CD8-positive, alpha-beta T cell (primary cell): ENCODE measurements at regions of chr4 and their contacts with region 1.

Region 1: DNA sequence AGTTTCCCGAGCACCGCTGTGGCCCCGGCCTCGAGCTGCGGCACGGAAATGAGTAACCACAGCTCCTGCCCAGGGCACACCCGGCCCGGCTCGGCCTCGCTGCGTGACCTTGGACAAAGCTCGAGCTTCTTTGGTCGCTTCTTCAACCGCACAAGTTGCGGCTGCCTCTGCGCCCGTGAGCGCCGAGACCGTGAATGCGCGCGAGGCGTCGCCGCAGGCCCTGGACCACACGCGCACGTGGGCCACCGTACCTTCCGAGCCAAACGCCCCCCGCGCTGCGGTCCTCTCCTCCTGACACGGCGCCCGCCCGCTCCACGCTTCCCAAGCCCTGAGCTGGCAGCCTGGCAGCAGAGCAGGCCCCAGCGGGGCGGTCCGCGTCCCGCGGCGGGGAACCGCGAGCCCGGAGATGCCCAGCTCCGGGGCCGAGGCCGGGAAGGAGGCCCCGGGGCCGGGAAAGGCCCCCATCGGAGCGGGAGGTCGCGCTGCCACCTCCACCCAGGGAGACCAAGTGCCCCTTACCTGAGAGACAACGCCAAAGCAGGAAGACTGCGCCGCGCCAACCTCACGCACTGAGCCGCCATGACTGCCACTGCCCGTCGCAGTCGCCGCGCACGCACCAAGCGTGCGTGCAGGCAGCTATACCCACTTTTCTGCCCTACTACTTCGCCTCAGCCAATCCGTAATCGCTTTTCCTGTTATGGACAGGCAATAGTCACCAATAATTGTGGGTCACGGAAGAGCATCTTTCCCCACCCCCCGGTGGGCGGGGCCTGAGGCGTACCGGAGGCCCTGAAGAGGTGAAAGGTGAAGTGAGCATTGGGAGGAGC is at the start of gene GRPEL1:
- DNase-seq: peak; percentile 100
- ATAC-seq: peak; percentile 92
- H3K4me3 ChIP-seq: peak within 1 kb of the TSS; percentile 86 to 87
- H3K4me3 Mint-ChIP-seq: peak within 1 kb of the TSS; percentile 95
- H3K27ac ChIP-seq: peak within 1 kb of the TSS; percentile 83 to 89
- H3K27ac Mint-ChIP-seq: peak within 1 kb of the TSS; percentile 97
- H3K4me1 ChIP-seq: peaks cover 35% of the 10 kb centered on the region
- H3K4me1 Mint-ChIP-seq: peaks cover 46% of the 10 kb centered on the region
- H3K27me3 ChIP-seq: no peaks in the 10 kb centered on the region
- H3K27me3 Mint-ChIP-seq: no peaks in the 10 kb centered on the region
- CTCF ChIP-seq: no peak
- total RNA-seq, gene GRPEL1: 61.1 to 61.5 TPM

Region 2: GRCh38 chr4:6109842-6110719 is 957.6 kb before region 1 on chr4:
- CTCF ChIA-PET with region 1: no interaction called
- POLR2A ChIA-PET with region 1: no interaction called
- intact Hi-C with region 1: no loop called
- DNase-seq: peak in 1 of 9 experiments; percentile 43
- ATAC-seq: no peak
- H3K4me3 ChIP-seq: no peak overlapping the region
- H3K4me3 Mint-ChIP-seq: no peak overlapping the region
- H3K27ac ChIP-seq: no peak overlapping the region
- H3K27ac Mint-ChIP-seq: no peak overlapping the region
- H3K4me1 ChIP-seq: no peaks in the 10 kb centered on the region
- H3K4me1 Mint-ChIP-seq: no peaks in the 10 kb centered on the region
- H3K27me3 ChIP-seq: no peaks in the 10 kb centered on the region
- H3K27me3 Mint-ChIP-seq: peaks cover 6% of the 10 kb centered on the region
- CTCF ChIP-seq: no peak

Region 3: DNA sequence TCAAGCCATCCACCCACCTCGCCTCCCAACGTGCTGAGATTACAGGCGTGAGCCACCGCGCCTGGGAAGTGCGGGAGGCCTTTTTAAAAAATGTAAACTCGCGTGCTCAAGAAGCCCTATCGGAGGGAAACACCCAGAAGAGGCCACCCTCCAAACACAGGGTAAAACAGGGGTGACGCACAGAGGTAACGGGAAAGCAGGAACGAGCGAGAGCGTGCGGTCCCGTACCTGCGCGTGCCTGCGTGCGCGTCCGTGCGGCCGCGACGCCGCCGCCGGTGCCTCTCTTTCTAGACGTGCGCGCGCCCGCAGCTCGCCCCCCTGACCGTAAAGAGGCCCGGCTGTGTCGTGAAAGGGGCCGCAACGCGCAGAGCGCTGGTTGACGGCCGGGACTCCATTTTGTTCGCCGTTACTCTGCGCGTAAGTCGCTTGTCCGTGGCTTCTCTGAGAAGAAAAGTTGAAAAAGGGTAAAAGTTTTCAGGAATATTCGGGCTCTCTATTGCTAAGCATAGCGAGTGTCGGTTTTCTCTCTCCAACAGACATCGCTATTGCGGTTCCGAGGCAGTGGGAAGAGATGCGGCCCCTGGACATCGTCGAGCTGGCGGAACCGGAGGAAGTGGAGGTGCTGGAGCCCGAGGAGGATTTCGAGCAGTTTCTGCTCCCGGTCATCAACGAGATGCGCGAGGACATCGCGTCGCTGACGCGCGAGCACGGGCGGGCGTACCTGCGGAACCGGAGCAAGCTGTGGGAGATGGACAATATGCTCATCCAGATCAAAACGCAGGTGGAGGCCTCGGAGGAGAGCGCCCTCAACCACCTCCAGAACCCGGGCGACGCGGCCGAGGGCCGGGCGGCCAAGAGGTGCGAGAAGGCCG is 427.1 kb before region 1 on chr4 and contains the start of gene MRFAP1:
- CTCF ChIA-PET with region 1: interaction called, 4 read pairs
- POLR2A ChIA-PET with region 1: interaction called, 13 read pairs
- intact Hi-C with region 1: loop called (anchors 1 to 5 kb)
- DNase-seq: peak; percentile 90 to 98 (median 95)
- ATAC-seq: peak; percentile 79
- H3K4me3 ChIP-seq: peak within 1 kb of the TSS; percentile 96 to 97
- H3K4me3 Mint-ChIP-seq: peak within 1 kb of the TSS; percentile 99
- H3K27ac ChIP-seq: peak within 1 kb of the TSS; percentile 96
- H3K27ac Mint-ChIP-seq: peak within 1 kb of the TSS; percentile 99
- H3K4me1 ChIP-seq: peaks cover 17% of the 10 kb centered on the region
- H3K4me1 Mint-ChIP-seq: peaks cover 41% of the 10 kb centered on the region
- H3K27me3 ChIP-seq: no peaks in the 10 kb centered on the region
- H3K27me3 Mint-ChIP-seq: no peaks in the 10 kb centered on the region
- CTCF ChIP-seq: no peak
- total RNA-seq, gene MRFAP1: 177 to 183 TPM

Region 4: GRCh38 chr4:6873792-6874461 is 193.7 kb before region 1 on chr4:
- CTCF ChIA-PET with region 1: interaction called, 18 read pairs
- POLR2A ChIA-PET with region 1: no interaction called
- intact Hi-C with region 1: no loop called
- DNase-seq: peak; percentile 69 to 89 (median 82)
- ATAC-seq: peak; percentile 96
- H3K4me3 ChIP-seq: no peak overlapping the region
- H3K4me3 Mint-ChIP-seq: no peak overlapping the region
- H3K27ac ChIP-seq: no peak overlapping the region
- H3K27ac Mint-ChIP-seq: no peak overlapping the region
- H3K4me1 ChIP-seq: no peaks in the 10 kb centered on the region
- H3K4me1 Mint-ChIP-seq: peaks cover 3% of the 10 kb centered on the region
- H3K27me3 ChIP-seq: no peaks in the 10 kb centered on the region
- H3K27me3 Mint-ChIP-seq: no peaks in the 10 kb centered on the region
- CTCF ChIP-seq: peak; percentile 79

Region 5: GRCh38 chr4:6917461-6918271 is 150.0 kb before region 1 on chr4:
- CTCF ChIA-PET with region 1: interaction called, 11 read pairs
- POLR2A ChIA-PET with region 1: interaction called, 7 read pairs
- intact Hi-C with region 1: no loop called
- DNase-seq: peak in 4 of 9 experiments; percentile 34 to 65 (median 56)
- ATAC-seq: peak; percentile 43
- H3K4me3 ChIP-seq: peak overlapping the region in 1 of 2 experiments; percentile 12
- H3K4me3 Mint-ChIP-seq: peak overlapping the region; percentile 52
- H3K27ac ChIP-seq: peak overlapping the region; percentile 34 to 72
- H3K27ac Mint-ChIP-seq: peak overlapping the region; percentile 94
- H3K4me1 ChIP-seq: peaks cover 51% of the 10 kb centered on the region
- H3K4me1 Mint-ChIP-seq: peaks cover 78% of the 10 kb centered on the region
- H3K27me3 ChIP-seq: no peaks in the 10 kb centered on the region
- H3K27me3 Mint-ChIP-seq: no peaks in the 10 kb centered on the region
- CTCF ChIP-seq: peak; percentile 40

Region 6: GRCh38 chr4:7021930-7022658 is 45.6 kb before region 1 on chr4:
- CTCF ChIA-PET with region 1: interaction called, 10 read pairs
- POLR2A ChIA-PET with region 1: no interaction called
- intact Hi-C with region 1: no loop called
- DNase-seq: no peak
- ATAC-seq: no peak
- H3K4me3 ChIP-seq: no peak overlapping the region
- H3K4me3 Mint-ChIP-seq: no peak overlapping the region
- H3K27ac ChIP-seq: no peak overlapping the region
- H3K27ac Mint-ChIP-seq: no peak overlapping the region
- H3K4me1 ChIP-seq: no peaks in the 10 kb centered on the region
- H3K4me1 Mint-ChIP-seq: no peaks in the 10 kb centered on the region
- H3K27me3 ChIP-seq: no peaks in the 10 kb centered on the region
- H3K27me3 Mint-ChIP-seq: no peaks in the 10 kb centered on the region
- CTCF ChIP-seq: no peak

Region 7: DNA sequence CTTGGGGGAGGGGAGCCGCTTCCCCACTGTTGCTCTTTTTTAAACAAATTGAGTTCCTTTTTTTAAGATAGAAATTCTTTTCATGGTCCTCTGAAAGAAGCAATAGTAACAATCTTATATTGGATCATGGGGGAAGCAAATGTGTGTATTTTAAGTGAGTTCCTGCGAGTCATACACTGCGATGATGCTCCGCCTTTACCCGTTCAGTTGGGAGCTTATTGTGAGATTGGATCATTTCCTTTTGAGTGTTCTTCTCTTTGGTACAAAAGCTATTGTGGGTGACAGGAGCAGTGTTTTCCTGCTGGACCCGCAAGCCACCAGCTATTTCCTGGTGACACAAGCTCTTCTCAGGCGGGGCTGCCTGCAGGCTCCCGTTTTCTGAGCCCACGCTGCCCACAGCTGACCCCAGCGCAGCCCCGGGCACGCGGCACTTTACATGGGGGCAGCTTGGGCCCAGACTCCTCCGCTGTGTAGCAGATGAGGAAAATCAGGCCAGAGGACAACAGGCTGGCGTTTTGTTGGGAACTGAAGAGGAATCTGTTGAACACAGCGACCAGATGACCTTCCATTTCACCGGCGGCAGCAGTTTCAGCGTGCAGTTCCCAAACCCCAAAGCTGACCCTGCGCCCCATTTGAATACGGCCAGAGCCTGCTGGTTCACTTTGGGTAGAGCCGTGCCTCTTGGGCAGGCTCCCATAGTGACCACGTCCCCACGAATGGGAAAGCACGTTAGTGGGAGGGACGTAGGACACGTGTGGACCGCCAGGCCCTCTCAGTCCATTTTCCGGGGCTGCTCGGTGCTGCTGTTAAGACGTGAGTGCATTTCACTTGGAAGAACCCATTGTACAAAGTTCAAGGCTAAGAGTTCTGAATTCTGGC is 12.3 kb before region 1 on chr4:
- CTCF ChIA-PET with region 1: interaction called, 23 read pairs
- POLR2A ChIA-PET with region 1: interaction called, 7 read pairs
- intact Hi-C with region 1: no loop called
- DNase-seq: no peak
- ATAC-seq: no peak
- H3K4me3 ChIP-seq: no peak overlapping the region
- H3K4me3 Mint-ChIP-seq: no peak overlapping the region
- H3K27ac ChIP-seq: no peak overlapping the region
- H3K27ac Mint-ChIP-seq: no peak overlapping the region
- H3K4me1 ChIP-seq: peaks cover 13% of the 10 kb centered on the region
- H3K4me1 Mint-ChIP-seq: peaks cover 23% of the 10 kb centered on the region
- H3K27me3 ChIP-seq: no peaks in the 10 kb centered on the region
- H3K27me3 Mint-ChIP-seq: no peaks in the 10 kb centered on the region
- CTCF ChIP-seq: no peak